Activated T-helper 1 cell treated with anti-CD3 and anti-CD28 coated beads, Interleukin-12 subunit alpha, Interleukin-12 subunit beta, Interleukin-2, Interleukin-4 antibody, amounts not matched to agents 30 ng/mL and 10 ng/mL and 1 ng/mL, durations not matched to agents 14 hours and 24 hours and 36 hours (primary cell): ENCODE measurements at regions of chr7 and their contacts with region 1.

Region 1: GRCh38 chr7:82572195-82572880 is 128.8 kb upstream of the CACNA2D1 start:
- DNase-seq: peak; percentile 36
- H3K4me3 Mint-ChIP-seq: no peak overlapping the region
- H3K27ac Mint-ChIP-seq: no peak overlapping the region
- H3K4me1 Mint-ChIP-seq: no peaks in the 10 kb centered on the region
- H3K27me3 Mint-ChIP-seq: peaks cover 1% of the 10 kb centered on the region

Region 2: DNA sequence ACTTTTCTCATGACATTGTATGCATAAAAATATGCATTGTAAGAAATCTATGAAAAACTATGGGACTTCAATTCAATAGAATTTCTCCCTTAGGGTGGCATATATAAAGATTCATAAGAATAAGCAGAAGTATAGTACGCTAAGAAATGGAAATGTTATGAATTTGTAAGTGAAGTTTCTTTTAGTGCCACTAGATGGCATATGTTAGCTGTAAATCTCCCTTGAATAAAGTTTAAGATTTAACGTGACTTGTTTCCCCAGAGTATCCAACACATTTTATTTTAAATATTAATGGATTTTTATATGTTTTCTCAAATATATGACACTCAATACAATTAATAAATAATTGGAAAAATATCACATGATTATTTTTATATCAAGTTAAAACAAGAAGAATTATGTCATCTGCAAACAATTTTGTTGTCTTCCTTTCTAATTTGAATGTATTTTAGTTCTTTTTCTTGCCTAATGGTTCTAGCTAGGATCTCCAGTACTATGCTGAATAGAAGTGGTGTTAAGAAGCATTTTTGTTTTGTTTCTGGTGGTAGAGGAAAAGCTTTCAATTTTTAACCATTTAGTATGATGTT is 1089.6 kb before region 1 on chr7:
- intact Hi-C with region 1: loop called (anchors 1 kb)
- DNase-seq: no peak
- H3K4me3 Mint-ChIP-seq: no peak overlapping the region
- H3K27ac Mint-ChIP-seq: no peak overlapping the region
- H3K4me1 Mint-ChIP-seq: no peaks in the 10 kb centered on the region
- H3K27me3 Mint-ChIP-seq: no peaks in the 10 kb centered on the region

Region 3: GRCh38 chr7:81499262-81500116 is 1072.8 kb before region 1 on chr7:
- intact Hi-C with region 1: loop called (anchors 1 kb)
- DNase-seq: no peak
- H3K4me3 Mint-ChIP-seq: no peak overlapping the region
- H3K27ac Mint-ChIP-seq: no peak overlapping the region
- H3K4me1 Mint-ChIP-seq: no peaks in the 10 kb centered on the region
- H3K27me3 Mint-ChIP-seq: no peaks in the 10 kb centered on the region

Region 4: DNA sequence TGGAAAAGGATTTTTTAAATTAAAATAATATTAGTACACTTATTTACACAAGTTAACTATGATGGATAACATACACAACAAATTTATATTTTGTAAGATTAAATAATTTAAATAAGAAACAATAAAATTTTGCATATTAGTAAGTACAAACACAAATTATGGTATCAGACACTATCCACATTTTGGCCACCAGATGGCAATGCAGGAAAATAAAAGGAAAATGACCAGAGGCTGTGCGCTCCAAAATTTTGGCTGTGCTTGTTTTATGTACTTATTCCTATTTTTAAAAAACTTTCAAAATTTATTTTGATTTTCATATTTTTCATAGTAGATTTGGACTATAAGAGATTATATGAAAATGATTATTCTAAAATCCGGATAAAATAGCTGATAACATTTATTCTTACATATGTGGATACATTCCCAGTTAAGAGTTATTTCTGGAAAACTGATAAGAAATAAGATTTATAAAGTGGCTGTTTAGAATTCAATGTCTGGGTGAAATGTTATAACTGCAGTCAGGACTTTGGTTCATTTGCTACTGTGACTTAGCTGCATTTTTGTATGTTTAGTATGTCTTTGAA is 527.7 kb before region 1 on chr7:
- intact Hi-C with region 1: loop called (anchors 1 kb)
- DNase-seq: no peak
- H3K4me3 Mint-ChIP-seq: no peak overlapping the region
- H3K27ac Mint-ChIP-seq: no peak overlapping the region
- H3K4me1 Mint-ChIP-seq: no peaks in the 10 kb centered on the region
- H3K27me3 Mint-ChIP-seq: no peaks in the 10 kb centered on the region

Region 5: GRCh38 chr7:82234457-82235049 is 337.8 kb before region 1 on chr7:
- intact Hi-C with region 1: loop called (anchors 1 kb)
- DNase-seq: no peak
- H3K4me3 Mint-ChIP-seq: no peak overlapping the region
- H3K27ac Mint-ChIP-seq: no peak overlapping the region
- H3K4me1 Mint-ChIP-seq: no peaks in the 10 kb centered on the region
- H3K27me3 Mint-ChIP-seq: no peaks in the 10 kb centered on the region